Activated CD8-positive, alpha-beta T cell treated with anti-CD3 and anti-CD28 coated beads for 36 hours (primary cell): ENCODE measurements at regions of chr15 and their contacts with region 1.

Region 1: GRCh38 chr15:65304389-65305144 is at the start of gene RNU5B-1:
- DNase-seq: peak; percentile 89
- ATAC-seq: peak; percentile 74
- H3K4me3 Mint-ChIP-seq: peak within 1 kb of the TSS; percentile 93
- H3K27ac Mint-ChIP-seq: peak within 1 kb of the TSS; percentile 98
- H3K4me1 Mint-ChIP-seq: peaks cover 26% of the 10 kb centered on the region
- H3K27me3 Mint-ChIP-seq: no peaks in the 10 kb centered on the region
- CTCF ChIP-seq: peak; percentile 95
- total RNA-seq, gene RNU5B-1: not detected

Region 2: DNA sequence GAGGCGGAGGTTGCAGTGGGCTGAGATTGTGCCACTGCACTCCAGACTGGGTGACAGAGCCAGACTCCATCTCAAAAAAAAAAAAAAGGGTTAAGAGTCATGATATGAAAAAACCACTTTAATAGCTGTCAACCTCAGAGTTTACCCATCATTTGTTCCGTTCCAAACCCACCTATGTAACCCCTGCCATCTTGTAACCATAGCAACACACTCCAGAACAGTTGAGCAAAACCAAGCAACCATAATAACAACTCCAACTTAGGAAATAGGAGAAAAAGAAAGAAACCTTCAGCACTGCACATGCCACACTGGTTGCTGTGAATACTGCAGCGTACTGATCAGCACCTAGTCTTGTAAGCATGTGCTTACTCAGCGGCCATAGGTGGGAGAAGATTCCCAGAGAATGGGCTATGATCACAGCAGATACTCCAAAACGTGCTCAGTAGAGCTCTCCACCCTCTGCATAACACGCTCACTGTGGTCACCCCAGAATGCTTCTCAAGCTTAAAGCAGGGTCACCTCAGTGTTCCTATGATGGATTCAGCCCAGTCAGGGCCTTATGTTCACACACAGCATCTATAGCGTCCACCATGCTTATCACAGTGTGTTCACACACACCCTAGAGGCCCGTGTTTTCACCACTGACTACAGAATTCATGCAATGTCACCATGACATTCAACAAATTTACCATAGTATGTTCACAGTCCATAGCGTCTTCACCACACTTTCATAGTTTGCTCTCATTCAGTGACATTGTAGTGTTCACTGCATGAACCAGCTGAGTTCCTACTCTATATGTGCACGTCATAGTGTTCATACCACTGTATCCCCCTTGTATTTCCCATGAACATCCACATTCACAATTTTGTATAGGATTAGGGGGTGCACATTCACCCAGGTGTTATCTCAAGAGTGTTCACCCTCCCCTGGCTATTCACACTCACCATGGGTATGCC is 86.8 kb before region 1 on chr15:
- CTCF ChIA-PET with region 1: no interaction called
- POLR2A ChIA-PET with region 1: interaction called, 12 read pairs
- intact Hi-C with region 1: no loop called
- DNase-seq: peak; percentile 12
- ATAC-seq: peak; percentile 71
- H3K4me3 Mint-ChIP-seq: peak overlapping the region; percentile 7
- H3K27ac Mint-ChIP-seq: no peak overlapping the region
- H3K4me1 Mint-ChIP-seq: peaks cover 19% of the 10 kb centered on the region
- H3K27me3 Mint-ChIP-seq: peaks cover 1% of the 10 kb centered on the region
- CTCF ChIP-seq: no peak

Region 3: DNA sequence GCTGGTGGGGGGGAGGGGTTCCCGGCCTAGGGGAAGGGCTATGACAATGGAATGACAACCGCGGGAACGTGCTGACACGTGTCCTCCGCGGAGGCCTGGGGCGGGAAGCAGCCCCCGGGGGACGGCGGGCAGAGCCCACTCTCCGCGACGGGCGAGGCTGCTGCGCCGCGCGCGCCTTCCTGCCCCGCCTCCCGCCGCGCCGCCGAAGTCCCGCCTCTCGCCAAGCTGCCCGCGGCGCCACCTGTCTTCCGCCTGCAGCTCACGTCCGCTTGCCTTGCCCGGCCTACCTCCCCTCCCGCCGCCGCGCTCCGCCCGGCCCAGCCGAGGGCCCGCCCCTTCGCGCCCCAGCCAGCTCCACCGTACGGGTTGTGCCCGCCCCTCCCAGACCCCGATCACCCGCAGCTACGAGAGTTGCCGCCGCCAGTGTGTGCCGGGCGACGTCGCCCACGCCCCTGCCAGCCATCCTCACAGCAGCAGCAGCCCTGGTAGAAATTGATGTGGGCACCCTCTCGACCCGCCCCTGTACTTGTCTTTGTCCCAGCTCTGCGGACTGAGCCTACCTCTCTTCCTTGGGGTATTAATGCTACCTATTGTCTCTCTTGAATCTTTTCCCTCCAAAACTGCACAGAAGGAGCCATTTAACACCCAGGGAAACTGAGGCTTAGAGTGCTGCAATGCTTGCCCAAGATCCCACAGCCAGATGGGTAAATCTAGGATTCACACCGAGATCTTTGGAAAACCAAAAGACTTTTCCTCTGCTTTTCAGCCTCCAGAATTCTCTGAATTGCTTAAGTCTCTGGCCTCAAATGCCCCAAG is 17.7 kb before region 1 on chr15 and contains the start of gene PARP16:
- CTCF ChIA-PET with region 1: interaction called, 7 read pairs
- POLR2A ChIA-PET with region 1: interaction called, 80 read pairs
- intact Hi-C with region 1: no loop called
- DNase-seq: peak; percentile 94
- ATAC-seq: peak; percentile 98
- H3K4me3 Mint-ChIP-seq: peak within 1 kb of the TSS; percentile 87
- H3K27ac Mint-ChIP-seq: peak within 1 kb of the TSS; percentile 90
- H3K4me1 Mint-ChIP-seq: peaks cover 32% of the 10 kb centered on the region
- H3K27me3 Mint-ChIP-seq: no peaks in the 10 kb centered on the region
- CTCF ChIP-seq: no peak
- total RNA-seq, gene PARP16: 17.9 to 20.5 TPM

Region 4: GRCh38 chr15:65318870-65319356 is 14.3 kb after region 1 on chr15:
- CTCF ChIA-PET with region 1: interaction called, 20 read pairs
- POLR2A ChIA-PET with region 1: interaction called, 25 read pairs
- intact Hi-C with region 1: no loop called
- DNase-seq: peak; percentile 84
- ATAC-seq: peak; percentile 100
- H3K4me3 Mint-ChIP-seq: no peak overlapping the region
- H3K27ac Mint-ChIP-seq: no peak overlapping the region
- H3K4me1 Mint-ChIP-seq: no peaks in the 10 kb centered on the region
- H3K27me3 Mint-ChIP-seq: peaks cover 7% of the 10 kb centered on the region
- CTCF ChIP-seq: peak; percentile 89